ENCODE measurements at regions of chr13 and their contacts with region 1.

Region 1: GRCh38 chr13:48037346-48038173 is at the start of gene NUDT15:
- DNase-seq: peak; percentile 96
- H3K4me3 ChIP-seq: peak within 1 kb of the TSS; percentile 55 to 73 (median 64)
- H3K27ac ChIP-seq: peak within 1 kb of the TSS; percentile 92
- H3K4me1 ChIP-seq: peaks cover 20% of the 10 kb centered on the region
- H3K27me3 ChIP-seq: no peaks in the 10 kb centered on the region
- CTCF ChIP-seq: peak; percentile 98 to 99
- total RNA-seq, gene NUDT15: 12.0 to 30.2 TPM

Region 2: DNA sequence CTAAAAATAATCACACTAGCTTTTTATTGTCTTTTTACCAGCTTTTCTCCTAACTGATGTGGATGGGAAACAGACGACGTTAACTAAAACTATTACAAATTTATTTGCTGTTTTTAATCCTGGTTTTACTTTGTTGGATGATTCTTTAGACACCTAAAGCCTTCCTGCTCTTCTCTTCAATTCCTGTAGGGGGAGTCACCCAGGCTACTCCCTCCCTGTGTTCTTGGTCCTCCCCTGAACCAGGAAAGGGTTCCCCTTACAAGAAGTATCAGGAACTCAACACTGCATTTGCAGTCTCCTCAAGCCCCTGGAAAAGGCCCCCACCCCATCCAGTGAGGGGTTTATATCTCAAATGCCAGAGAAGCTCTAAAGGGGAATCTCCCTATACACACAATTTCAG is 242.6 kb before region 1 on chr13:
- CTCF ChIA-PET with region 1: no interaction called
- dilution Hi-C with region 1: loop called (anchors 10 kb)
- in situ Hi-C with region 1: no loop called
- intact Hi-C with region 1: loop called (anchors 1 kb)
- DNase-seq: peak; percentile 4
- H3K4me3 ChIP-seq: no peak overlapping the region
- H3K27ac ChIP-seq: no peak overlapping the region
- H3K4me1 ChIP-seq: no peaks in the 10 kb centered on the region
- H3K27me3 ChIP-seq: no peaks in the 10 kb centered on the region
- CTCF ChIP-seq: peak; percentile 70 to 72

Region 3: DNA sequence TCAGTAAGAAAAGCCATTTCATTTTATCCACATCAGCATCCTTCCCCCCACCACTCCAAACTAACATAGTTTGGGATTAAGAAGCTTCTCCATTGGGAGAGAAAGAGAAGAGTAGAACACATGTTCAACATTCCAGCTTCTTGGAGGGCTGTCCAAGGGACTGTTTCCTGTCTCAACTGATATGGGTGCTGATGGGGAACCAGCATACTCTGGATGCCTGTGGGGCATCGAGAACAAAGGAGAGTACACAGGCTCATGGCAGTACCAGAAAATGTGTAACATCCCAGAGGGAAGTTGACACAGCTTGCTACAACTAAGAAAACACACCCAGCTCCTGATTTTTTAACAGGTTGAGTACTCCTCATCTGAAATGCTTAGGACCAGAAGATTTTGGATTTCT is 61.2 kb before region 1 on chr13:
- CTCF ChIA-PET with region 1: no interaction called
- dilution Hi-C with region 1: no loop called
- in situ Hi-C with region 1: no loop called
- intact Hi-C with region 1: loop called (anchors 10 kb)
- DNase-seq: no peak
- H3K4me3 ChIP-seq: no peak overlapping the region
- H3K27ac ChIP-seq: no peak overlapping the region
- H3K4me1 ChIP-seq: no peaks in the 10 kb centered on the region
- H3K27me3 ChIP-seq: no peaks in the 10 kb centered on the region
- CTCF ChIP-seq: no peak

Region 4: DNA sequence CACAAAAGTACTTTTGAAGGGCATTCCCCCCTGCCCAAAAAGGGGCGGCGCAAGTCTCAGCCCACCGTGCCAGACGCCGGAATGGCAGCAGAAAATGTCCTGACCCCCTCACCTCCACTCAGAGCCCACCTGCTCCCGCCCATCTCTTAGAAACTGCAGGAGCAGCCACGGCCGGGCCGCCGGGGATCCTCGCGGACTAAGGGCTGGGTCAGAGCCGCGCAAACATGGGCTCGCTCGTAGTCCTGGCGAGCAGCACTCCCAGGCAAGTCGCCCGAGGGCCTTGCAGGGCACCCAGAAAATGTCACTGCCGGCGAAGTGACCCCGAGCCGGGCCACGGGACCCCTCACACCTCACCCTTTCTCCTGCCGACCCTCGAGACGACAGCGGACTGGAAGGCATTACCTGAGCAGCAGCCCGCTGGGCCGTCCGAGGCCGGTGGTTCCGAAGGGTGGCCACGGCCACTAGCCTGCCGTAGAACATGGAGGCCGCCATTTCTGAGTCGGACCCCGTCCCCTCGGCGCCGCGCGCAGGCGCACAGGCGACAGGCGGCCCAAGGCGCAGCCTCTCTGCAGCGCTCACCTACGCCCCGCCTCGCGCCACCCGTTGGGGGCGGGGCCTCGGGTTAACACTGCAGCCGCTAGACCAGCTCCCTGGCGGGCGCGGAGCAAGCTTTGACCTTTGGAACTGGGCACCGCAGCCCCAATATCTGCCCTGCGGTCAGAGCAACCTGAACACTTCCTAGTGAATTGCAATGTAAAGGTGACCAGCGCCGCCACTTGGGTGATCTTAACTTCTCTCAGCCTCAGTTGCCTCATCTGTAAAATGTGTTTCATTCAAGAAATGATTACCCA is 36.6 kb before region 1 on chr13 and contains the start of gene SUCLA2:
- CTCF ChIA-PET with region 1: no interaction called
- dilution Hi-C with region 1: no loop called
- in situ Hi-C with region 1: no loop called
- intact Hi-C with region 1: loop called (anchors 1 kb)
- DNase-seq: peak; percentile 84
- H3K4me3 ChIP-seq: peak within 1 kb of the TSS; percentile 82 to 94 (median 93)
- H3K27ac ChIP-seq: peak within 1 kb of the TSS; percentile 94
- H3K4me1 ChIP-seq: peaks cover 13% of the 10 kb centered on the region
- H3K27me3 ChIP-seq: no peaks in the 10 kb centered on the region
- CTCF ChIP-seq: no peak
- total RNA-seq, gene SUCLA2: 44.1 to 61.8 TPM

Region 5: GRCh38 chr13:48009298-48009697 is 28.3 kb before region 1 on chr13:
- CTCF ChIA-PET with region 1: no interaction called
- dilution Hi-C with region 1: no loop called
- in situ Hi-C with region 1: no loop called
- intact Hi-C with region 1: loop called (anchors 1 kb)
- DNase-seq: peak; percentile 84
- H3K4me3 ChIP-seq: no peak overlapping the region
- H3K27ac ChIP-seq: peak overlapping the region; percentile 62
- H3K4me1 ChIP-seq: peaks cover 34% of the 10 kb centered on the region
- H3K27me3 ChIP-seq: no peaks in the 10 kb centered on the region
- CTCF ChIP-seq: no peak

Region 6: GRCh38 chr13:48131533-48131932 is 94.0 kb after region 1 on chr13:
- CTCF ChIA-PET with region 1: no interaction called
- dilution Hi-C with region 1: no loop called
- in situ Hi-C with region 1: no loop called
- intact Hi-C with region 1: no loop called
- DNase-seq: peak; percentile 80
- H3K4me3 ChIP-seq: peak overlapping the region in 1 of 3 experiments; percentile 5
- H3K27ac ChIP-seq: peak overlapping the region; percentile 48
- H3K4me1 ChIP-seq: peaks cover 10% of the 10 kb centered on the region
- H3K27me3 ChIP-seq: no peaks in the 10 kb centered on the region
- CTCF ChIP-seq: no peak

Region 7: DNA sequence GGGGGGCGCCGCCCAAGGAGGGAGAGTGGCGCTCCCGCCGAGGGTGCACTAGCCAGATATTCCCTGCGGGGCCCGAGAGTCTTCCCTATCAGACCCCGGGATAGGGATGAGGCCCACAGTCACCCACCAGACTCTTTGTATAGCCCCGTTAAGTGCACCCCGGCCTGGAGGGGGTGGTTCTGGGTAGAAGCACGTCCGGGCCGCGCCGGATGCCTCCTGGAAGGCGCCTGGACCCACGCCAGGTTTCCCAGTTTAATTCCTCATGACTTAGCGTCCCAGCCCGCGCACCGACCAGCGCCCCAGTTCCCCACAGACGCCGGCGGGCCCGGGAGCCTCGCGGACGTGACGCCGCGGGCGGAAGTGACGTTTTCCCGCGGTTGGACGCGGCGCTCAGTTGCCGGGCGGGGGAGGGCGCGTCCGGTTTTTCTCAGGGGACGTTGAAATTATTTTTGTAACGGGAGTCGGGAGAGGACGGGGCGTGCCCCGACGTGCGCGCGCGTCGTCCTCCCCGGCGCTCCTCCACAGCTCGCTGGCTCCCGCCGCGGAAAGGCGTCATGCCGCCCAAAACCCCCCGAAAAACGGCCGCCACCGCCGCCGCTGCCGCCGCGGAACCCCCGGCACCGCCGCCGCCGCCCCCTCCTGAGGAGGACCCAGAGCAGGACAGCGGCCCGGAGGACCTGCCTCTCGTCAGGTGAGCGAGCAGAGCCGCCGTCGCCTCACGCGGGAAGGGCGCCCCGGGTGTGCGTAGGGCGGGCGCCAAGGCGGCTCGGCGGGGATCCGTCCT is 266.0 kb after region 1 on chr13 and contains the start of gene RB1:
- CTCF ChIA-PET with region 1: no interaction called
- dilution Hi-C with region 1: no loop called
- in situ Hi-C with region 1: no loop called
- intact Hi-C with region 1: loop called (anchors 2 kb)
- DNase-seq: peak; percentile 94
- H3K4me3 ChIP-seq: peak within 1 kb of the TSS; percentile 65 to 99 (median 86)
- H3K27ac ChIP-seq: peak within 1 kb of the TSS; percentile 97
- H3K4me1 ChIP-seq: peaks cover 18% of the 10 kb centered on the region
- H3K27me3 ChIP-seq: no peaks in the 10 kb centered on the region
- CTCF ChIP-seq: peak in 1 of 2 donors; percentile 1
- total RNA-seq, gene RB1: 34.7 to 48.6 TPM

Measured in mammary epithelial cell (primary cell).